Activated CD4-positive, alpha-beta memory T cell treated with anti-CD3 and anti-CD28 coated beads, Interleukin-2, amount 10 ng/mL, durations not matched to agents 7 days and 5 days (primary cell): ENCODE measurements at regions of chr5 and their contacts with region 1.

Region 1: DNA sequence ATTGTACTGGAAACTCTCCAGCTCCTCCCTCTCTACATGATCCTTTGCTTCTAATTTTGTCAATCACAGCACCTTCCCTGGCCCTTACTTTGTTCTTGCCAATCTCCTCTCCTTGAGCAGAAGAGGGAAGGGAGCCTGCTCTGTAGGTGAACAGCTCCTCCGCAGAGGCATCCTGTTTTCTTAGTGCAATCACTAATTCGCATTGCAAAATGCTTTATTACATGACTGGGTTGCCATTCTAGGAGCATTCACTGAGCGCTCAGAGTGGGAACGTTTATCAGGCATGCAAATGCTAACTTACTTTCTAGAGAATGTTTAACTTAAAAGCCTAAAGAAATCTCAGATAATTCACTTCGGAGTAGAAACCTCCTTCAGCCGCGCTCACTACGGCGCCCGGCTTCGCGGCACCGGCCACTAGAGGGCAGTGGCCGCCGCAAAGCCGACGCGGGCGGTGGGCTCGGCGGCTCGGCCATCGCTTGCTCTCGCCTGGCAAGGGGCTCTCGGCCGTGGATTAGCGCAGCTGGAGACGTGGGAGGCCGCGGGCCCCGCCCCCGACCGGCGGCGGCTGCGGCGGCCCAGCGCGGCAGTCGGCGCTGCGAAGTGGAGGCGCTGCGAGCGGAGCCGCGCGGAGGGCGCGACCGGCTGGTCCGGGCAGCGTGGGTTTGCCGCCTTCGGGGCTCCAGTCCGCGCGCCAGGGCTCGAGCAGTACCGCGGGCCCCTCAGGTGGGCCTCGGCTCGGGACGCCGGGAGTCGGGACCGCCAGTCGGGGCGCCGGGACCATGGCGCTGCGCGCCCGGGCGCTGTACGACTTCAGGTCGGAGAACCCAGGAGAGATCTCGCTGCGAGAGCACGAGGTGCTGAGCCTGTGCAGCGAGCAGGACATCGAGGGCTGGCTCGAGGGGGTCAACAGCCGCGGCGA is at the start of gene SNX18:
- DNase-seq: peak; percentile 93
- H3K4me3 Mint-ChIP-seq: peak within 1 kb of the TSS; percentile 92
- H3K27ac Mint-ChIP-seq: peak within 1 kb of the TSS; percentile 56
- H3K4me1 Mint-ChIP-seq: peaks cover 37% of the 10 kb centered on the region
- H3K27me3 Mint-ChIP-seq: peaks cover 24% of the 10 kb centered on the region
- total RNA-seq, gene SNX18: 38.9 to 39.6 TPM

Region 2: DNA sequence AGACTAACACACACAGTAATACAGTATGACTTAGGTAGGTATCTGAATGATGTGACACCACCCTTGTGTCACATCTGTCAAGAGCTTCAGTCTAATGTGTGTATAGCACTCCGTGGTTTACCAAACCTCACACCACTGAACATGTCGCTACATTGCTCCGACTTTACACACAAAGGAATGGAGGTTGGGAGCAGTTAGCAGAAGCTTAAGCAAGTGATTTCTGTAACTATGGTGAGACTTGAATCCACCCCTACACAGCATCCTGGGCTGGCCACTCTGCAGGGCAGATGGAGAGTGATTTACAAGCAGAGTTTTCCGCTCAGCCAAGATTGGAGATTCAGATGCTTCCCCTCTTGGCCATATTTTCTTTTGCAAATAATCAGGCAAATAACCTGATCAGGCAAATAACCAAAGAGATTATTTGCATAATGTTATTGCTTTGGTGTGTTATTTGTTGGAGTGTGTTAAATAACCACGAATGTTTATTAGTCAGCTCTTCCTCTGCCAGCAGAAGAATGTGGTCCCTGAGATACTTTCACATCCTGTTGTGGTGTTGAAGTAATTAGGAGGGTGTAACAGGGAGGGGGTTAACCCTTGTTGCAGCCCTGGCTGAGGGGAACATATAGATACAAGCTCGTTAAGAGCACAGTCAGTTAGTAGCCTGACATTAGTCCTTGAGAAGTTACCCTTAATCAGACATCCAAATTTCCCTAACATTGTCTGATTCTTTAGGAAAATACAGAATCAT is 92.9 kb after region 1 on chr5:
- CTCF ChIA-PET with region 1: interaction called, 6 read pairs
- POLR2A ChIA-PET with region 1: interaction called, 12 read pairs
- DNase-seq: peak; percentile 68
- H3K4me3 Mint-ChIP-seq: peak overlapping the region; percentile 53
- H3K27ac Mint-ChIP-seq: peak overlapping the region; percentile 99
- H3K4me1 Mint-ChIP-seq: peaks cover 31% of the 10 kb centered on the region
- H3K27me3 Mint-ChIP-seq: no peaks in the 10 kb centered on the region

Region 3: DNA sequence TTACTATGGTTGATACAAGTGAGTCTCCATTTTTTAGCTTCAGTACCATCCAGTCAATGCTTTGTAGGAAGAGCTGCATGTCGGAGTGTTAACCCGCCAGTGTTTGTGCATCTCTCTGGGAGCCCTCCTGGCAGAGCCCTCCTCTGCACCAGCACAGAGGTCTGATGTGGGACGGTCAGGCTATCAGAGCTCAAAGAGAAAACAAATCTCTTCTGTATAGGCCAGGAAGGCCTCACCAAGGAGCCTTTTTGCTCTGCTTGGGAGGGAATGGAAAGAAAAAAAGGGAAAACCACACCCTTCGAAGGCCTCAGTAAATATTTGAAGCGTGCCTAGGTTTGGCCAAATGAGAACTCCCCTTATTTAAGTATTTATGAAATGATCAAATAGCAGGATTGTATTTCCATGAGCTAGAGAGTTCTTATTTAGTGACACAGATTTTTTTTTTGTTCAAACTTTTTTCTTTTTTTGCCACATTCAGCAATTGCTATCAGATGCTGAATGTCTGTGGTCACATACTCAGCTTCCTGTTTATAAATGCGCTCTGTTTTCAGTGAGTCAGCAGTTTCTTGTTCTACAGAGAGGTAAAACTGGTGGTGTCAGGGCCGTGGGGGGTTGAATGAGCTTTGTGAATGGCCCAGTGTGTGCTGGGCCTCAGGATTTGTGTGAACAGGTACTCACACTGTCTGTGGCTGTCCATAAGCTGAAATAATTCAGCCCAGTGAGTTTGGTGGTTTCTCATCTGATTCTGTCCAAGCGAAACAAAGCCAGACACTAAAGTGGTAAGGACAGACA is 226.8 kb after region 1 on chr5:
- CTCF ChIA-PET with region 1: interaction called, 10 read pairs
- POLR2A ChIA-PET with region 1: interaction called, 20 read pairs
- DNase-seq: peak; percentile 71
- H3K4me3 Mint-ChIP-seq: peak overlapping the region; percentile 35
- H3K27ac Mint-ChIP-seq: peak overlapping the region; percentile 89
- H3K4me1 Mint-ChIP-seq: peaks cover 56% of the 10 kb centered on the region
- H3K27me3 Mint-ChIP-seq: peaks cover 3% of the 10 kb centered on the region

Region 4: DNA sequence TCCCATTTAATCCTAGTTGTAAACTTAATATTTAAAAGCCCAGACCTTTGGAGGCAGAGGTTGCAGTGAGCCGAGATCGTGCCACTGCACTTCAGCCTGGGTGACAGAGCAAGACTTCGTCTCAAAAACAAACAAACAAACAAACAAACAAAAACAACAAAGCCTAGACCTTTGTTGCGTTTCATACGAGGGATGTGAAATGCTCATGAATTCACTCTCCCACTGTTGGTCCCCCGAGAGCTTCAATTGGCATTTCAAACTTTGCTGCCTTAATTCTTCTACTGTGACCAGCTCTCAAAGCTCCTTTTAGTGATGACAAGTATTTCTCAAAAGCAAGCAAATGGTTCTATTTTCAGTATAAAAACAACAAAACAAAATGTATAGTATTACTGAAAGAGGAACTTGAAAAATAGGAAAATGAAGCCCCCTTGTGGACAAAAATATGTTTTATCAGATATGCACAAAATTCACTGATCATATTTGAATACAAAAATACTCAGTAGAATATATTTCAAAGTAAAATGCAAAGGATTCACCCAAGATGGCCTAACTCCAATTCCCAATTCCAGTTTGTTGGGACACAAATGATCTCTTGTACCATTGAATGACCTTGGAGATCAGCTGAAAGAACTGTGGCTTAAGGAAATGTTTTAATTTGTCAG is 327.6 kb after region 1 on chr5:
- CTCF ChIA-PET with region 1: interaction called, 132 read pairs
- POLR2A ChIA-PET with region 1: interaction called, 31 read pairs
- DNase-seq: no peak
- H3K4me3 Mint-ChIP-seq: no peak overlapping the region
- H3K27ac Mint-ChIP-seq: no peak overlapping the region
- H3K4me1 Mint-ChIP-seq: peaks cover 12% of the 10 kb centered on the region
- H3K27me3 Mint-ChIP-seq: peaks cover 18% of the 10 kb centered on the region

Region 5: DNA sequence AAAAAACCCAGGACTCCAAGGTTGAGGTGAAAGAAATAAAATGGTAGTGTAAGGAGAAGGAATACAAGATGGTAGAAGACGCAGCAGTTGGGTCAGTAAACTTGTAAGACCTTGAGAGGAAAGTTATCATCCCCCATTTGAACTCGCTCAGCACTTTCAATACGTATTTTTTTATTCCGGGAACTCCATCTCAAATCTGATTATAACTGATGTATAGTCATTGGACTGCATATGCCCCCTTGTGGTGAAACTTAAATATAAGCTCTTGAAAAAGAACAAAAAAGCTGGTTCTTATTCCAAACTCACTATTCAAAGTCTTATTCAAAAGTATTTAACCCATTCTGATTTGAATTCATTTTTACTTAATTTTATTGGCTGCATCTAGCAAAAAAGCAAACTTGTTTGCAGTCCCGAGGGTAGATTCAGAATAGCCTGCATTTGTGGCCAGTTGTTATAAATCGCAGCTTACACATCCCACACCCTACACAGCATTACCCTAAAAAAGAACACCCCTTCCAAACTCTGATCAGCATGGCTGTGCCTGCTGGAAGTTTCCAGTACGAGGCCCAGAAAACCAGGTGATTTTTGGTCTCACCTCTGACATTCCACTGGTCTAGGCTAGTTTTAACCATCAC is 350.0 kb after region 1 on chr5:
- CTCF ChIA-PET with region 1: interaction called, 106 read pairs
- POLR2A ChIA-PET with region 1: interaction called, 19 read pairs
- DNase-seq: no peak
- H3K4me3 Mint-ChIP-seq: no peak overlapping the region
- H3K27ac Mint-ChIP-seq: no peak overlapping the region
- H3K4me1 Mint-ChIP-seq: peaks cover 20% of the 10 kb centered on the region
- H3K27me3 Mint-ChIP-seq: peaks cover 61% of the 10 kb centered on the region